Activated T-helper 1 cell treated with anti-CD3 and anti-CD28 coated beads, Interleukin-12 subunit alpha, Interleukin-12 subunit beta, Interleukin-2, Interleukin-4 antibody, amounts not matched to agents 30 ng/mL and 10 ng/mL and 1 ng/mL, durations not matched to agents 14 hours and 24 hours and 36 hours (primary cell): ENCODE measurements at regions of chr14 and their contacts with region 1.

Region 1: DNA sequence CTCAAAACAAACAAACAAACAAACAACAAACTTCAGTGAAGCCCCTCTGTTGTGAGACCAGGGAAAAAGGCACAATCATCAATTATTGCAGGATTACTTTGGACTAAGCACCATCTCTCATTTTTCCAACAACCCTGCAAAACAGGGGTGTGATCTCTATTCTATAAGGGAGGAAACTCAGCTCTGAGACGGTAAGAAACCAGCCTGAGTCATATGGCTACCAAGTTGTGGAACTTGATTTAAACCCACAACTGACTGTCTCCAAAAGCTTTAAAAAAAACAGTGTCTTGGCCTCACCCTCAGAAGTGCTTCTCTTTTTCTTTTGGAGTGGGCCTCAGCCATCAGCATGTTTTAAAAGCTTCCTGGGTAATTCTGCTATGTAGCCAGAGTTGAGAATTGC is 49.8 kb downstream of the RIN3 start:
- DNase-seq: peak; percentile 38
- H3K4me3 Mint-ChIP-seq: no peak overlapping the region
- H3K27ac Mint-ChIP-seq: peak overlapping the region; percentile 10
- H3K4me1 Mint-ChIP-seq: peaks cover 73% of the 10 kb centered on the region
- H3K27me3 Mint-ChIP-seq: no peaks in the 10 kb centered on the region

Region 2: DNA sequence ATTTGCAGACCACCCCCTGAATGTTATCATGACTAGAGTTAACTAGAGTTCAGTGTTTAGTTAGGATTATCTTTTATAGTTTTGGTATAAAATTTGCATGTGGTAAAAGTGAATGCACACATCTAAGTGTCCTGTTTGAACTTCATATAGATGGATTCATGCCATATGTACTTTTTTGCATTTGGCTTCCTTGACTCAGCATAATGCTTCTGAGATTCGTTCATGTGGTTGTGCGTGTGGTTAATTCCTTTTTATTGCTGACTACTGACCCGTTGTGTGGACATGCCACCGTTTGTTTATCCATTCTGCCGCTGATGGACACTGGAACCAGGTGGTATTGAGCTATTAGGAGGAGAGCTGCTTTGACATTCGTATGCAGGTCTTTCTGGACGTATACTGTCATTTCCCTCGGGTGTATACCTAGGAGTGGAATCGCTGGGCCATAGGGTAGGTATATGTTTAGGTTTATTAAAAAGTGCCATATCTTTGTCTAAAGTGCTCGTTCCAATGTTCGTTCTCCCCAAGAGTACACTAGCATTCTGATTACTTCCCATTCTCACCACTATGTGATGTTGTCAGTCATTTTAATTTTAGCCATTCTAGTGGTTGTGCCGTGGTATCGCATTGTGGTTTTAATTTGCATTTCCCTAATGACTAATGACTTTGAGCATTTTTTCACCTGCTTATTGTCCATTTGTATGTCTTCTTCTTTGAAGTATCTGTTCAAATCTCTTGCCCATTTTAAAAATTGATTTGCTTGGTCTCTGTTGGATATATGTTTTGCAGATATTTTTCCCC is 12.1 kb before region 1 on chr14:
- intact Hi-C with region 1: loop called (anchors 2 kb)
- DNase-seq: no peak
- H3K4me3 Mint-ChIP-seq: no peak overlapping the region
- H3K27ac Mint-ChIP-seq: no peak overlapping the region
- H3K4me1 Mint-ChIP-seq: peaks cover 35% of the 10 kb centered on the region
- H3K27me3 Mint-ChIP-seq: peaks cover 2% of the 10 kb centered on the region

Region 3: DNA sequence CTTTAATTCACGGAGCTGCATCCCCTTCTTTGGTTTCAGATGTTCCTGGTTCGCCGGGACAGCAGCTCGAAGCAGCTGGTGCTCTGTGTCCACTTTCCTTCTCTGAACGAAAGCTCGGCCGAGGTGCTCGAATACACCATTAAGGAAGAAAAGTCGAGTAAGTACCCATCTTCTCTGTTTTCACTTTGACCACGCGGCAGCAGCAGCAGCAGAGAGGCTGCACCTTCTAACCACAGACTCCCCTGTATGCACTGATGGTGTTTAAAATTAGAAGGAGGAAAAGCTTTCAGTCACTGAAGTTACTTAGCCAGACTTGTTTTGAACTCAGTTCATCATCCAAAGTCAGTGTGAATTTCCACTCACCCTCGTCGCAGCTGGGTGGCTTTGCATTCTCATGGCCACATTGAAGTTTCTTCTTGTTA is 14.0 kb after region 1 on chr14:
- intact Hi-C with region 1: loop called (anchors 1 kb)
- DNase-seq: peak; percentile 21
- H3K4me3 Mint-ChIP-seq: peak overlapping the region; percentile 61
- H3K27ac Mint-ChIP-seq: peak overlapping the region; percentile 76
- H3K4me1 Mint-ChIP-seq: peaks cover 49% of the 10 kb centered on the region
- H3K27me3 Mint-ChIP-seq: peaks cover 15% of the 10 kb centered on the region

Region 4: DNA sequence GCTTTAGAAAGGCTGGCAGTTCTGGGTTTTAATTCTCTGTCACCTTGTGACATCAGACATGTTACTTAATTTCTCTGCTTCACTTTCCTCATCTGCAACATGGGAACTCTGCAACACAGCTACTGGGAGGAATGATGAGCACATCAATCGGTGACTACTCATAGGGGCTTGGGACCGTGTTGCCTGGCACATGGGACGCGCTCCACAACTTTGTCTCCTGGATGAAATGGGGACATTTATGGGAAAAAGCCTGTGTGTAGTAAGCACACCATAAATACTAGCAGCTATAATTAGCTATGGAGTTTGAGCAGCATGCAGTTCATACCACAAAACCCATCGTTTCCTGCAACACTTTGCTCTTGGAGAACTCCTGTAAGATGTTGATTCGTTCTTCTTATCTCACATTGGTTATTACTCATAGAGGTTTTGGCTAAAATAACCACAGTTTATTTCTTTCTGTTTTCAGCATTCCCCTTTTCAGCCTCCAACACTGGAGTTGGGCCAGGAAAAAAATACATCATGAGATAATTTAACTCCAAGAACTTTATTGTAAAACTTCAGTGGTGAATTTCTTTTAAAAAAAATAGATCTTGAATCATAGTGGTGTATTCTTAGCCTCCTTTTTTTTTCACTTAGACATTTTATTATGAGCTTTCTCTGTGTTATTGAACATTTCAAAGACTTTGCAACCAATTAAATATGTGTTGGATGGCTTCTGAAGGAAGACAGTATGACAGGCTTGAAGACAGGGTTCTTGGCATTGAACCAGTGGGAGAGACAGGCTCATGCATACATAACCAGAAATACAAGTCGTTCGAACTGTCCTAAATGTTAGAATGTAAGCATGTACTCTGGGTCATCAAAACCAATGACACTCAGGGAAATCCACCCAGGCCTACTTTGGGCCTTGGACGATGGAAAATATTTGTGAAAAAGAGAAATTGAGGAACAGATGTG is 22.9 kb after region 1 on chr14:
- intact Hi-C with region 1: loop called (anchors 1 kb)
- DNase-seq: peak; percentile 36
- H3K4me3 Mint-ChIP-seq: peak overlapping the region; percentile 67
- H3K27ac Mint-ChIP-seq: peak overlapping the region; percentile 82
- H3K4me1 Mint-ChIP-seq: peaks cover 83% of the 10 kb centered on the region
- H3K27me3 Mint-ChIP-seq: peaks cover 2% of the 10 kb centered on the region

Region 5: DNA sequence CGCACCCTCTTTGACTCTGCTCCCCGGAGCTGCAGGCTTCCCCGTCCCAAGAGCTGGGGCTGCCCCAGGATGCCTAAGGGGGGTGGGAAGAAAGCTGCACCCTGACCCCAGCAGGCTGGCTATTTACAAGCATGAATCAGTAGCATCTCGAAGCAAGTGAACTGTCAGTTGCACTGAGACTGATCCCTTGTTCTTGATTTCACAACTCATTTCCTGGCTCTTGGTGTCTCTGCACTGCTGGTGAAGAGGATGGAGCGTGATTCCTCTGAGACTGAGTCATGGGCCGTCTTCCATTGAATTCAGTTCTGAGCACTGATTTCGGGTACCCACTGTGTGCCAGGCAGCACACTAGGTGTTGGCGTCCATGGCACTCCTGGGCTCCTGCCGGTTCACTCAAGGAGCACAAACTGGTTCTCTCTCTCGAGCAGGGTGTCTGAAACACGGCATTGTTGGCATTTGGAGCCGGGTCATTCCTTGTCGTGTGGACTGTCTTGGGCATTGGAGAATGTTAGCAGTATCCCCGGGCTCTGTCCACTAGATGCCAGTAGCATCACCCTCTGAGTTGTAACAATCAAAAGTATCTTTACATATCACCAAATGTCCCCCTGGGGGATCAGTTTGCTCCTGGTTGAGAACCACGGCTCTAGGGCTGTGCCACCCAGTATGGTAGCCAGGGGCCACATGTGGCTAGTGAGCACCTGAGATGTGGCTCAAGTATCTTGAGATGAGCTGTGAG is 37.1 kb after region 1 on chr14:
- intact Hi-C with region 1: no loop called
- DNase-seq: no peak
- H3K4me3 Mint-ChIP-seq: no peak overlapping the region
- H3K27ac Mint-ChIP-seq: no peak overlapping the region
- H3K4me1 Mint-ChIP-seq: peaks cover 17% of the 10 kb centered on the region
- H3K27me3 Mint-ChIP-seq: peaks cover 17% of the 10 kb centered on the region